ENCODE measurements at regions of chr15 and their contacts with region 1.

Region 1: GRCh38 chr15:74307827-74308644 is 59.4 kb downstream of the CYP11A1 start:
- DNase-seq: peak in 1 of 2 experiments; percentile 74
- H3K4me3 ChIP-seq: peak overlapping the region in 1 of 4 experiments; percentile 37; a peak in 1 of 8 replicates
- H3K27ac ChIP-seq: no peak overlapping the region
- H3K4me1 ChIP-seq: peaks cover 0 to 36% (median 22%) of the 10 kb centered on the region in 4 experiments; a peak in 6 of 7 replicates
- H3K27me3 ChIP-seq: peaks cover 0 to 10% (median 0%) of the 10 kb centered on the region in 4 experiments; a peak in 4 of 7 replicates
- CTCF ChIP-seq: peak; percentile 74 to 87 (median 85)
- EP300 ChIP-seq: no peak
- POLR2A ChIP-seq: no peak
- RAD21 ChIP-seq: peak; percentile 87 to 89

Region 2: DNA sequence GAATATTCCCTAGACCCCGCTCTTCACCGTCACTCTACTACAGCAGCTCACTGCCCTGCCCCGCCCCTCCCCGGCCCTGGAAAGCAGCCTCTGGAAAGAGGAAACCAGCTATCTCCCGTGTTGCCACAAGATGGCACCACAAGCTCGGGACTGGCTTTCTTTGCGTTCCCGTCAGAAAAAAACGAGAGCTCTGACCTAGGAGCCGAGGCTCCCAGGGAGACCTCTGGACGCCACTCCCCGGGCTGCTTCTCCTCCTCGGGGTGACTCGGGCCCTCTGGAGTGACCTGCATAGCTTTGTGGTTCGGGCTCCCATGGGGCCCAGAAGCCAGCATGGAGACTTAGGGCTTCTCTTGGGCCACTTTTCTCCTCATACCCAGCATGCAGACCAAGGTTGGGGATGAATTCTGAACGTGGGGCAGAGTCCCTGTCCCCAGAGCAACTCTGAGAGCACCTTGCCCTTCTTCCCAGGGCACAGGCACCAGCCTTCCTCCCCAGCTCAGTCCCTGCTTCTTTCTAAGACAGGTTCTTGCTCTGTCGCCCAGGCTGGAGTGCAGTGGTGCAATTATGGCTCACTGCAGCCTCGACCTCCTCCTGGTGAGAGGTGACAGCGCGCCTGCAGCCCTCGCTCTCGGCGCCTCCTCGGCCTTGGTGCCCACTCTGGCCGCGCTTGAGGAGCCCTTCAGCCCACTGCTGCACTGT is 334.9 kb before region 1 on chr15:
- CTCF ChIA-PET with region 1: interaction called, 12 read pairs
- POLR2A ChIA-PET with region 1: no interaction called
- DNase-seq: peak; percentile 54 to 92
- H3K4me3 ChIP-seq: peak overlapping the region in 1 of 4 experiments; percentile 44; a peak in 1 of 8 replicates
- H3K27ac ChIP-seq: no peak overlapping the region
- H3K4me1 ChIP-seq: peaks cover 0 to 8% (median 2%) of the 10 kb centered on the region in 4 experiments; a peak in 4 of 7 replicates
- H3K27me3 ChIP-seq: peaks cover 0 to 4% (median 2%) of the 10 kb centered on the region in 4 experiments; a peak in 3 of 7 replicates
- CTCF ChIP-seq: peak; percentile 82 to 94 (median 91)
- EP300 ChIP-seq: no peak
- POLR2A ChIP-seq: no peak
- RAD21 ChIP-seq: peak; percentile 97 to 99

Region 3: DNA sequence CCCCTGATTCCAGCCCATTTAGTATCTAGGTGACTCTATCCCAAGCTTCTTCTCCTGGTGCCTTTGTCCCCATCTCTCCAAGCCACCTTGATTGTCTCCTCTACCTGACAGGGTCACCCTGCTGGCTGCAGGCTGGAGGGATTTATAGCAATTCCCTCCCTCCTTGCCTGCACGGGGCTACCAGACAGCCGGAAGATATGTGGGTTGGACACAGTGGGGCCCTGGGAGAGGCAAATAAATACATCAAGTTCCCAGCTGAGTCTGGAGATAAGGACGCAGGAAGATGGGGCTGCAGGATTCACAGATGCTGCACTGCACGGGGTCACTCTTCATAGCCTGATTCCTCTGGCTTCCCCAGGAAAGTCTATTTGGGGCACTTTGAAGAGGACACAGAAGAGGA is 187.0 kb before region 1 on chr15:
- CTCF ChIA-PET with region 1: interaction called, 31 read pairs
- POLR2A ChIA-PET with region 1: no interaction called
- DNase-seq: no peak
- H3K4me3 ChIP-seq: no peak overlapping the region
- H3K27ac ChIP-seq: no peak overlapping the region
- H3K4me1 ChIP-seq: peaks cover 0 to 14% (median 11%) of the 10 kb centered on the region in 4 experiments; a peak in 6 of 7 replicates
- H3K27me3 ChIP-seq: peaks cover 0 to 5% (median 1%) of the 10 kb centered on the region in 4 experiments; a peak in 2 of 7 replicates
- CTCF ChIP-seq: no peak
- EP300 ChIP-seq: no peak
- POLR2A ChIP-seq: no peak
- RAD21 ChIP-seq: no peak

Region 4: GRCh38 chr15:74172701-74173379 is 135.2 kb before region 1 on chr15:
- CTCF ChIA-PET with region 1: interaction called, 11 read pairs
- POLR2A ChIA-PET with region 1: interaction called, 3 read pairs
- DNase-seq: no peak
- H3K4me3 ChIP-seq: no peak overlapping the region
- H3K27ac ChIP-seq: no peak overlapping the region
- H3K4me1 ChIP-seq: peaks cover 0 to 20% (median 12%) of the 10 kb centered on the region in 4 experiments; a peak in 5 of 7 replicates
- H3K27me3 ChIP-seq: no peaks in the 10 kb centered on the region; a peak in 3 of 7 replicates
- CTCF ChIP-seq: no peak
- EP300 ChIP-seq: no peak
- POLR2A ChIP-seq: no peak
- RAD21 ChIP-seq: no peak

Region 5: DNA sequence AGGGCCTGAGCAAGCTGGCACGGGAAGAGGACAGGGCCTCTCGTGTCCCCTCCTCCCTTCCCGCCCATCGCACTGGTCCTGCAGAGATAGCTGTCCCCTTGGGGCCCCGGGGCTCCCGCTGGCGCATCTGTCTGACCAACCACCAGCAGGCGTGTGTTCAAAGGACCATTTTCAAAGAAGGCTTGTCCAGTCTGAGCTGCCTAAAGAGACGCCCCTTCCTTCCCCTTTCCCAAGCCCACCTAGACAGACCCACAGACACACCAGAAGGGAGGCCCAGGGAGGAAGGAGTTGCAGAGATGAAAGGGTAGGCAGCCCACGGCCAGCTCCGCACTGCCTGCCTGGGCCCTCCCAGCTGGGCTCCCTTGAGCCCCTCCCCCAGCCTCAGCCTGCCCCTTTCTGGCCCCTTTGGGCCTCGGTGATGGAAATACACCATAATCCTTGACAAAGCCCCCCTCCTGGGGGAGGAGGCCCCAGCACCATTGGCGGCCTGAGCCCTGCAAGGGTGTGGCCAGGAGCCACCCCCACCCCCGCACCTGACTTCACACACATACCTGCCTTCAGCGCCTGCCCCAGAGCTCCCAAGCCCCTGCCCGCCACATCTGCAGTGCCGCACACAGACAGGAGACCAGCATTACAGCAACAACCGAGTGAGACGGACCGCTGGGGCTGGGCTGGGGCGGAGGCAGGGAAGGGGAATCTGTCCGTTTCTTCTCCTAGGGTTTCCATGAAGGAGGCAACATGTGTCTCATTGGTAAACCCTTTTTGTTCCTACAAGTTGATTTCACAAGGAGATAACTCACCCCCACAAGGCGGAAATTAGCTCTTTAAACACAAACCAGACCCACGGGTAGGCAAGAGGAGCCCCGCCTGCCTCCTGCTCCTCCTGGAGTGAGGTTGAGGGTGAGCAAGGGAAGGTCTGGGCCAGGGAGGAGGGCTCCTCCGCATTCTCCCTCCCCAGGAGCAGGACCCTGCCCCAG is 105.3 kb before region 1 on chr15 and contains the start of gene STRA6:
- CTCF ChIA-PET with region 1: interaction called, 38 read pairs
- POLR2A ChIA-PET with region 1: interaction called, 4 read pairs
- DNase-seq: peak; percentile 90 to 93
- H3K4me3 ChIP-seq: peak within 1 kb of the TSS; percentile 26 to 60 (median 56); a peak in 7 of 8 replicates
- H3K27ac ChIP-seq: peak within 1 kb of the TSS; percentile 46; the same call in 1 of the 2 replicates
- H3K4me1 ChIP-seq: peaks cover 0 to 49% (median 33%) of the 10 kb centered on the region in 4 experiments; a peak in 6 of 7 replicates
- H3K27me3 ChIP-seq: peaks cover 0 to 7% (median 4%) of the 10 kb centered on the region in 4 experiments; a peak in 2 of 7 replicates
- CTCF ChIP-seq: peak; percentile 56 to 68 (median 60)
- EP300 ChIP-seq: peak in 1 of 2 experiments; percentile 89; a peak in 1 of 3 replicates
- POLR2A ChIP-seq: peak in 1 of 2 experiments; percentile 34; a peak in 2 of 3 replicates
- RAD21 ChIP-seq: peak; percentile 55 to 77
- total RNA-seq, gene STRA6: 7.6 and 9.3 TPM in 2 replicates

Region 6: GRCh38 chr15:74265046-74265639 is 42.9 kb before region 1 on chr15:
- CTCF ChIA-PET with region 1: interaction called, 87 read pairs
- POLR2A ChIA-PET with region 1: no interaction called
- DNase-seq: peak; percentile 27 to 87
- H3K4me3 ChIP-seq: no peak overlapping the region
- H3K27ac ChIP-seq: no peak overlapping the region
- H3K4me1 ChIP-seq: peaks cover 7 to 15% (median 9%) of the 10 kb centered on the region in 4 experiments
- H3K27me3 ChIP-seq: peaks cover 0 to 8% (median 0%) of the 10 kb centered on the region in 4 experiments; a peak in 1 of 7 replicates
- CTCF ChIP-seq: no peak
- EP300 ChIP-seq: no peak
- POLR2A ChIP-seq: no peak
- RAD21 ChIP-seq: peak in 1 of 2 experiments; percentile 9; a peak in 1 of 4 replicates

Region 7: DNA sequence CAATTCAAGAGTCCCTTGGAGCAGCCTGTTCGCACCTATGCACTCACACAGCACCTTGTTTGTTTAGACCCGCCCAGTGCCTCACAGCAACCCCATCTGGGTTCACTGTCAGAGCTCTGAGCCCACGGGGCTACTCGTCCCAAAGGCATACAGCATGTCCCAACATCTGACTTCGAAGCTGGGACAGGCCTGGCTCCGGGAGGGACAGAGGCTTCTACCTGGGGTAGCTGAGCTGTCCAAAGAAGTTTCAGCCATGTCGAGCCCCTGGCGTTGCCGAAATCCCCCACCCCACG is 88.1 kb after region 1 on chr15:
- CTCF ChIA-PET with region 1: no interaction called
- POLR2A ChIA-PET with region 1: no interaction called
- DNase-seq: no peak
- H3K4me3 ChIP-seq: no peak overlapping the region
- H3K27ac ChIP-seq: no peak overlapping the region
- H3K4me1 ChIP-seq: peaks cover 0 to 12% (median 6%) of the 10 kb centered on the region in 4 experiments; a peak in 4 of 7 replicates
- H3K27me3 ChIP-seq: no peaks in the 10 kb centered on the region
- CTCF ChIP-seq: no peak
- EP300 ChIP-seq: no peak
- POLR2A ChIP-seq: no peak
- RAD21 ChIP-seq: no peak

Measured in H1 (cell line).